ENCODE measurements at regions of chr20 and their contacts with region 1.

Region 1: DNA sequence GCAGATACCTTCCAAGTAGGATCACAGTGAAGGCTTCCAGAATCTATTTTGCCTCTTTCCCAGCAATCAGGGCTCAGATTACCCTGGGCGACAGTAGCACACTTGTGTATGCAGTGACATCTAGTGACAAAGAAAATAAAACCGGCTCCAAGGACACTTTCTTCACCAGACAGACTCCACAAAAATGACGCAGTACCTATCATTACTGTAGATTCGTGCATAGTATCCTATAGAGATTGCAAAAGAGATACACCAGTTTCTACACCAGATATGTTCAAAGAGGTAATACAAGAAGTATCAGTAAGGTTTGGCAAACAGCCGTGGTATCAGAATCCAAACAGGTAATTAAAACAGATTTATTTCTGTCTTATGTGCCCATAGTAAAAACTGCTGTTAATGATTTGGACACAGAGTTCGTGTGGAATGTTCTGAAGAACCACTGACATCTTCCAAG is 600.4 kb upstream of the JAG1 start:
- DNase-seq: peak; percentile 26 to 49
- H3K4me3 ChIP-seq: no peak overlapping the region
- H3K27ac ChIP-seq: no peak overlapping the region
- H3K4me1 ChIP-seq: no peaks in the 10 kb centered on the region
- H3K27me3 ChIP-seq: no peaks in the 10 kb centered on the region
- CTCF ChIP-seq: peak in 4 of 6 experiments; percentile 45 to 67 (median 62)
- POLR2A ChIP-seq: no peak

Region 2: DNA sequence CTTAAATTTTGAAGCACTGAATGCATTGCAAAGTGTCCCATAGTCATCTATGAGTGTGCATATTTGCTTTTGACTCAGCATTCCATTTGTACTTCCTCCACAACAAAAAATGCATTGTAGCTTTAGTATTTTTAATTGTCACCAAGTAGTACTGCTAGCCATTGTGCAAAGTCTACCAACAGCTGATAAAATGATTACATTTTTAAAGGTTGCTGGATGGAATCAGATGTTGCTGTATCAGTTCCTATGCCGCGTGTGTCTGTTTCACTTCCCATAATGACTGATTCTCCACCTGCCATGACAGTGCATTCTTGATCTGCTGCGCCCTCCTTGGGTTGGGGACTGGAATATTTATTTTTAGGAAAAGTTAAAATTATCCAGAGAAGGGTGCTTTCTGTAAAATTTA is 797.8 kb before region 1 on chr20:
- intact Hi-C with region 1: loop called (anchors 10 kb)
- DNase-seq: no peak
- H3K4me3 ChIP-seq: no peak overlapping the region
- H3K27ac ChIP-seq: no peak overlapping the region
- H3K4me1 ChIP-seq: peaks cover 6 to 10% of the 10 kb centered on the region in 2 donors
- H3K27me3 ChIP-seq: no peaks in the 10 kb centered on the region
- CTCF ChIP-seq: no peak
- POLR2A ChIP-seq: no peak

Region 3: GRCh38 chr20:10553326-10553984 is 720.7 kb before region 1 on chr20:
- intact Hi-C with region 1: loop called (anchors 10 kb)
- DNase-seq: peak; percentile 74 to 80
- H3K4me3 ChIP-seq: no peak overlapping the region
- H3K27ac ChIP-seq: no peak overlapping the region
- H3K4me1 ChIP-seq: peaks cover 13 to 21% of the 10 kb centered on the region in 2 donors
- H3K27me3 ChIP-seq: no peaks in the 10 kb centered on the region
- CTCF ChIP-seq: peak; percentile 47 to 92 (median 82)
- POLR2A ChIP-seq: no peak

Region 4: GRCh38 chr20:10673988-10674711 is 600.0 kb before region 1 on chr20 and contains the start of gene JAG1:
- intact Hi-C with region 1: loop called (anchors 10 kb)
- DNase-seq: peak; percentile 96 to 97
- H3K4me3 ChIP-seq: peak within 1 kb of the TSS; percentile 45 to 77 (median 58)
- H3K27ac ChIP-seq: peak within 1 kb of the TSS; percentile 95 to 99 (median 98)
- H3K4me1 ChIP-seq: peaks cover 25 to 30% of the 10 kb centered on the region in 2 donors
- H3K27me3 ChIP-seq: no peaks in the 10 kb centered on the region
- CTCF ChIP-seq: no peak
- POLR2A ChIP-seq: peak; percentile 88 to 96
- total RNA-seq, gene JAG1: 41.2 to 67.9 (median 46.2) TPM

Region 5: GRCh38 chr20:11178946-11179654 is 95.1 kb before region 1 on chr20:
- intact Hi-C with region 1: no loop called
- DNase-seq: no peak
- H3K4me3 ChIP-seq: no peak overlapping the region
- H3K27ac ChIP-seq: no peak overlapping the region
- H3K4me1 ChIP-seq: no peaks in the 10 kb centered on the region
- H3K27me3 ChIP-seq: no peaks in the 10 kb centered on the region
- CTCF ChIP-seq: peak in 1 of 6 experiments; percentile 8
- POLR2A ChIP-seq: no peak

Measured in thyroid gland (tissue), 4 donors.